ENCODE measurements at regions of chr1 and their contacts with region 1.

Region 1: DNA sequence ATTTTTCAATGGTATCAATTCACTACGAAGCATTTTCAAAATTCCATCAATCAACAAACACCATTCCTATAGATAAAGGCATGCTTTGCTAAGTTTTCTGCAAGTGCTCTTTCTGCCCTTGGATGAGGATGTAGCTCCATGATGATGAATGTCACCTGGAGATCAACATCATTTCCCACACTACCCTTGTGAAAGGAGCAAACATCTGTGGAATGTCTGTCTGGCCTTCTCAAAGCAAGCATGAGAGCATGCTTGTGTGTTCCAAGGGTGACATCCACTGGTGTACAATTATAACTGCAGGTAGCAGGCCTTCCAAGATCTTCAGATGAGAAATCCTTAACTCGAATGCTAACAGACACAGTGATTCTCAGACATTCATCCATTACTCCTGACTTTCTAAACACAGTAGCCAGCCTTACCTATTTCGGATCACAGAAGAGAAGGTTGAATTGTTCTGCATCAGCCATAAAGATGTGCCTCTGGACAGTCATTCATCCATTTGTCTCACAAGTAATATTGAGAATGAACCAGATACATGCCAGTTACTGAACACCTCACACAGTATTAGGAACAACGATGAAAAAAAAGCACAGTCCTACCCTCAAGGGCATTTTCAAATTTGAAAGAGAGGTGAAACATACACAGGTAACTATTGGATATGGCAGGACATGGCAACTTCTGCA is 162.4 kb downstream of the TPR start:
- DNase-seq: peak in 6 of 9 donors; percentile 12 to 35 (median 28)
- ATAC-seq: peak; percentile 57
- H3K4me3 ChIP-seq: no peak overlapping the region
- H3K4me3 Mint-ChIP-seq: no peak overlapping the region
- H3K27ac ChIP-seq: no peak overlapping the region
- H3K27ac Mint-ChIP-seq: no peak overlapping the region
- H3K4me1 ChIP-seq: no peaks in the 10 kb centered on the region
- H3K4me1 Mint-ChIP-seq: peaks cover 0 to 2% (median 0%) of the 10 kb centered on the region in 7 donors
- H3K27me3 ChIP-seq: no peaks in the 10 kb centered on the region
- H3K27me3 Mint-ChIP-seq: peaks cover 24 to 53% (median 47%) of the 10 kb centered on the region in 5 donors

Region 2: DNA sequence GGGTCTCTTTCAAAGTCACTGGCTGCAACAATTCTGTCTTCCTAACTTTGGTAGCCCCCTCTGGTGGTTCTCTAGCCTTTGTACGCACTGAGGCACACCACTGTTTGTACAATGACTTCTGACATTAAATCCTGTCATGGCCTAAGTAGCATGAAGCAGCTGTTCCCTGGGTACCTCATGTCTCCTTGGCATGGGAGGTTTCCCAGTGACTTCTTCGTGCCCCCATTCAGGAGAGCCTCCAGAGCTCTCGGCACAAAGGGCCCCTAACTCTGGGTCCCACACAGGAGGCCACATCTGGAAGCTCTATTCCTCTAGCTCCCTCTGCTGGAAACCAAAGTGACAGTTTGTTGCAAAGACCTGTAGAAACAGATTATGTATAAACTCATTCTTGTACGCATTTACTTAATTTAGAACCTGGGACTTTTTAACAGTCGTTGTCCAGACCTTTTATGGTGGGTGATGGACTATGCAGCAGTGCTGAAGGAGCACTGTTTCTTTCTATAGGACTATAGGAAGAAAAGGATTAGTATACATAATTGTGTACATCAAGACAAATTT is 1042.3 kb before region 1 on chr1:
- CTCF ChIA-PET with region 1: no interaction called
- POLR2A ChIA-PET with region 1: no interaction called
- intact Hi-C with region 1: loop called in 1 of 2 experiments (anchors 5 kb)
- DNase-seq: peak in 8 of 9 donors; percentile 37 to 71 (median 65)
- ATAC-seq: peak; percentile 84
- H3K4me3 ChIP-seq: no peak overlapping the region
- H3K4me3 Mint-ChIP-seq: peak overlapping the region in 4 of 10 donors; percentile 35 to 56 (median 53)
- H3K27ac ChIP-seq: no peak overlapping the region
- H3K27ac Mint-ChIP-seq: peak overlapping the region in 4 of 9 donors; percentile 6 to 62 (median 43)
- H3K4me1 ChIP-seq: peaks cover 0 to 4% of the 10 kb centered on the region in 2 donors
- H3K4me1 Mint-ChIP-seq: peaks cover 0 to 17% (median 5%) of the 10 kb centered on the region in 7 donors
- H3K27me3 ChIP-seq: no peaks in the 10 kb centered on the region
- H3K27me3 Mint-ChIP-seq: no peaks in the 10 kb centered on the region

Region 3: DNA sequence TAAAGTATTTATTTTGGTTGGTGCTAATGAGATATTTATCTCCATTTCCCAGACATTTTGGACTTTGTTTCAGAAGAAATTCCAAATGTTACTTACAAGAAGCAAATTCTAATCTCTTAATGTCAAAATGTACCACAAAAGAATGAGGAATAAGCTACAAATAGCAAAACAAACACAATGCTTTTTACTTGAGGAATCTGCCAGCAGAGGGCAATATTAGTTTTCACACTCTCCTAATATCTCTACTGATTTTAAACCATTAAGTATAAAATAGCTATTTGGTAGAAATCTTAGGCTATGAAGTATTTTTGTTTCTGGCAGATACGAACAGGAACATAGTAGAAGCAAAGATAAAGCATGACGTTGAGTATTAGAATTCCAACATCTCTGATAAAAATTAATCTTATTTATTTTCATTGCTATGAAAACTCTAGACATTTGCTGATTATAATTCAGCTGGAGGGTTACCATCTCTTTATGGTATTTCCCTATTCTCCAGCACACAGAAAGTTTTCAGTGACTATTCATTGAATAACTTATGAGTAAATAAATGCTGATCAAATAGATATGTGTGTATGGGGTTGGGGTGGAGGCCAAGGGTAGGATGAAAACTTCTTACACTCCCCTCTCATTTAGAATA is 491.9 kb before region 1 on chr1:
- CTCF ChIA-PET with region 1: no interaction called
- POLR2A ChIA-PET with region 1: no interaction called
- intact Hi-C with region 1: loop called in 1 of 2 experiments (anchors 1 kb)
- DNase-seq: no peak
- ATAC-seq: no peak
- H3K4me3 ChIP-seq: no peak overlapping the region
- H3K4me3 Mint-ChIP-seq: no peak overlapping the region
- H3K27ac ChIP-seq: no peak overlapping the region
- H3K27ac Mint-ChIP-seq: no peak overlapping the region
- H3K4me1 ChIP-seq: no peaks in the 10 kb centered on the region
- H3K4me1 Mint-ChIP-seq: no peaks in the 10 kb centered on the region
- H3K27me3 ChIP-seq: no peaks in the 10 kb centered on the region
- H3K27me3 Mint-ChIP-seq: peaks cover 6 to 44% (median 27%) of the 10 kb centered on the region in 5 donors

Region 4: GRCh38 chr1:185813401-185813979 is 399.2 kb before region 1 on chr1:
- CTCF ChIA-PET with region 1: no interaction called
- POLR2A ChIA-PET with region 1: no interaction called
- intact Hi-C with region 1: loop called in 1 of 2 experiments (anchors 1 kb)
- DNase-seq: peak in 5 of 9 donors; percentile 5 to 15 (median 10)
- ATAC-seq: peak; percentile 50
- H3K4me3 ChIP-seq: no peak overlapping the region
- H3K4me3 Mint-ChIP-seq: no peak overlapping the region
- H3K27ac ChIP-seq: no peak overlapping the region
- H3K27ac Mint-ChIP-seq: no peak overlapping the region
- H3K4me1 ChIP-seq: no peaks in the 10 kb centered on the region
- H3K4me1 Mint-ChIP-seq: no peaks in the 10 kb centered on the region
- H3K27me3 ChIP-seq: no peaks in the 10 kb centered on the region
- H3K27me3 Mint-ChIP-seq: peaks cover 3 to 13% (median 8%) of the 10 kb centered on the region in 5 donors

Region 5: GRCh38 chr1:186155594-186155993 is 57.1 kb before region 1 on chr1:
- CTCF ChIA-PET with region 1: no interaction called
- POLR2A ChIA-PET with region 1: no interaction called
- intact Hi-C with region 1: loop called in 1 of 2 experiments (anchors 1 kb)
- DNase-seq: peak in 3 of 9 donors; percentile 2 to 4 (median 2)
- ATAC-seq: peak; percentile 37
- H3K4me3 ChIP-seq: no peak overlapping the region
- H3K4me3 Mint-ChIP-seq: no peak overlapping the region
- H3K27ac ChIP-seq: no peak overlapping the region
- H3K27ac Mint-ChIP-seq: no peak overlapping the region
- H3K4me1 ChIP-seq: no peaks in the 10 kb centered on the region
- H3K4me1 Mint-ChIP-seq: no peaks in the 10 kb centered on the region
- H3K27me3 ChIP-seq: no peaks in the 10 kb centered on the region
- H3K27me3 Mint-ChIP-seq: peaks cover 4 to 13% (median 8%) of the 10 kb centered on the region in 5 donors

Region 6: DNA sequence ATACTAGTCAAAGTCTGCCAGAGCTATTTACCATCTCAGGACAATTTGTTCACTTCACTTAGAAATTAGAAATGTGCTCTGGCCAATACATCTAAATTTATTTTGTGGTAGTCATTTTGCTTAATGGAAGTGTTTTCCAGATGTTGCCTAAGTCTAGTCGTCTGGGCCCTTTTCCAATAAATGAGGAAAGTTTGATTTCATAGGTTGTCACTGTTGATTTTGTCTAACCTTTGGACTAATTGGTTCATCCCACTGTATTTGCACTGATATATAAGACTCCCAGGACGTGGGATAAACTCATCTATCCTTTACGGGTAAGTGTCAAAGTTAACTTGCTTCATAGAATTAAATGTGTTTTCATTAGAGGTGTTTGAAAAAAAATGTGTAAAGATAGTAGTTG is 83.3 kb after region 1 on chr1:
- CTCF ChIA-PET with region 1: no interaction called
- POLR2A ChIA-PET with region 1: no interaction called
- intact Hi-C with region 1: no loop called
- DNase-seq: no peak
- ATAC-seq: no peak
- H3K4me3 ChIP-seq: no peak within 1 kb of the TSS
- H3K4me3 Mint-ChIP-seq: peak within 1 kb of the TSS in 5 of 10 donors; percentile 5 to 40 (median 26)
- H3K27ac ChIP-seq: no peak within 1 kb of the TSS
- H3K27ac Mint-ChIP-seq: peak within 1 kb of the TSS in 7 of 9 donors; percentile 18 to 100 (median 33)
- H3K4me1 ChIP-seq: peaks cover 0 to 8% of the 10 kb centered on the region in 2 donors
- H3K4me1 Mint-ChIP-seq: peaks cover 6 to 71% (median 56%) of the 10 kb centered on the region in 7 donors
- H3K27me3 ChIP-seq: no peaks in the 10 kb centered on the region
- H3K27me3 Mint-ChIP-seq: no peaks in the 10 kb centered on the region

Region 7: DNA sequence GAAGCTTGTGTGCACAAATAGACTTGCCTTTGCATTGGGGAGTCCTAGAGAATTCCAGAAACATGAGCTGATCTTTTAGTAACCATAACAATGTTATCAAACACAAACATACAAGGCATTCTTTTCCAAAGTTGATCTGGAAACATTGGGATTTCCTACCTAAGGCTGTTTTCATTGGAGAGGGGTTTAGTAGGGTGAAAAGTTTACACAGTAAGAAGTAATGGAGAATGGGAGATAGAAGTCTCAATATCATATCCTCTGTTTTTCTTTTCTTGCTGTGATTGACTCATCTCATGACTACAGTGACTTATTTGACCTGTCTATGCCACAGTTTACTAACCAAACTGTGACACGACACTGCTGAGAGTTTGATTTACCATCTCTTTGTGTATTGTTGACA is 550.4 kb after region 1 on chr1:
- CTCF ChIA-PET with region 1: no interaction called
- POLR2A ChIA-PET with region 1: no interaction called
- intact Hi-C with region 1: no loop called
- DNase-seq: no peak
- ATAC-seq: no peak
- H3K4me3 ChIP-seq: no peak overlapping the region
- H3K4me3 Mint-ChIP-seq: no peak overlapping the region
- H3K27ac ChIP-seq: no peak overlapping the region
- H3K27ac Mint-ChIP-seq: no peak overlapping the region
- H3K4me1 ChIP-seq: no peaks in the 10 kb centered on the region
- H3K4me1 Mint-ChIP-seq: no peaks in the 10 kb centered on the region
- H3K27me3 ChIP-seq: no peaks in the 10 kb centered on the region
- H3K27me3 Mint-ChIP-seq: peaks cover 0 to 3% (median 0%) of the 10 kb centered on the region in 5 donors

Measured in naive thymus-derived CD4-positive, alpha-beta T cell (primary cell).